ENCODE measurements at regions of chr17 and their contacts with region 1.

Region 1: DNA sequence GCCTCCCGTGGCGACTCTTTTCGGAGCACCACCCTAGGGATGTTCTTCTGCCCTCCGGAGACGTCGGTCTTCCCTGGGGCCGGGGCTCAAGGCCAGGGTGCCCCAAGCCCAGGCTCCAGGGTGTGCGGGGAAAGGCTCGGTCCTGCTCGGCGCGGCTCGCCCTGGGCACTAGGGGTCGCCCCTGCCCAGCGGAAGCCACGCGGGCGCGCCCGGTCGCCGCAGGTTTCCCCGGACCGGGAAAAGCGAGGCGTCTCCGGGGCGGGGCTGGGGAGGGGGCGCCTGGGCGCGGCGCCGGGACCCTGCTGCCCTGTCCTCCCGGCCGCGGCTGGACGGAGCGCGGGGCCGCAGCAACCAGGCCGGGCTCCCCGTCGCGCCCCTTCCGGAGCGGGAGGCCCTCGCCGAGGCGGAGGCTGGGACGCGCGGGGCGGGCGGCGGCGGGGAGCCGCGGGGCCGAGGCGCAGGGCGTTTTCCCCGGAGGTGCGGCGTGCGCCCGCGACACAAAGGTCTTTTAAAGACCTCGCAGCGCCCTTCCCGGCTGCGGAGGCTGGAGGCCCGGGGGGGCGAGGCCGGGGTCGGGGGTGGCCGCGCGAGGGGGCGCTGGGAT is 76.4 kb downstream of the MRC2 start:
- DNase-seq: peak; percentile 62 to 79
- ATAC-seq: peak; percentile 84 to 92 (median 86)
- H3K4me3 ChIP-seq: peak overlapping the region; percentile 36 to 73 (median 66)
- H3K27ac ChIP-seq: peak overlapping the region; percentile 71 to 95 (median 86)
- H3K4me1 ChIP-seq: peaks cover 8 to 39% (median 26%) of the 10 kb centered on the region in 9 donors
- H3K27me3 ChIP-seq: peaks cover 0 to 25% (median 0%) of the 10 kb centered on the region in 7 donors
- CTCF ChIP-seq: peak; percentile 69 to 94 (median 89)

Region 2: DNA sequence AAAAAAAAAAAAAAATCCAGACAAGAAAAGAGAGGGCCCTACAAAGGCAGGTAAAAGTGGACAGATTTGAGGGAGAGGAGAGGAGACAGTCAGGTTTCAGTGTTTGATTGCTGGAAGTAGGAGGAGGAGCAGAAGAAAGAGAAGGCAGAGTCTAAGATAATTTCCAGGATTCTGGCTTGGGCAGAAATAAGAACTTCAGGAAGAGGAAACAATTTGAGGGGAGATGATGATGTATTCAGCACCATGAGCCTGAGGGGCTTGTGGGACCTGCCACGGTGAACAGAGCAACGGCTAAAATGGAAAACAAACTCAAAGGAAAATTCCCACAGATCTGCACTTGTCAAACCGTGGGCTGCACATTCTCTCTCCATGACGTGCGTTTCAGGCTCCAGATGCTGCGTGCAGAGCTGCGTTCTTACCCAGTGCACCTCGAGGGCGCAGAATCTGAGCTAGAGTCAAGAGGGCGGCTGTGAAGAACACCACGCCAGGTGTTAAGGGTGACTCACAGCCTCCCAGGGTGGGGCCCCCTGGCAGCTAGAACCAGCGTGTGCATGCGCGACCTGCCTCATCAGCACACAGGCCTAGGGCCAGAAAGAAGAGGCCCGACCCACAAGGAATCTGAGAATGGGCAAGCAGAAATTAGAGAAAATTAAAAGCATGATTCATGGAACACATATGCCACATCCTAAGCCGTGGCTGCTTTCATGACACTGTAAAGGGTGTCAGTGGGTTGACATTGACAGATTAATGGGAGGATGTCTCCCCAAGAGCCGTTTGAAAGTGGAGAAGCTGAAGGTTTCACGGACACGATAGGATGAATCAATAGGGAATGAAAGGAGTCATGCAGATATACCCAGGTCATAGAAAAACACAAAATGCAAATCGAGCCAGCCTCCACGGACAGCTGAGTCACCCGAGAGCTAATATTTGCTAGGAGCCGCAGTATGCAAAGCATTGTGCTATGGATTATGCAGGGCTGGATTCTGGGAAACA is 75.1 kb after region 1 on chr17:
- intact Hi-C with region 1: no loop called
- DNase-seq: no peak
- ATAC-seq: peak in 1 of 8 donors; percentile 31
- H3K4me3 ChIP-seq: no peak overlapping the region
- H3K27ac ChIP-seq: no peak overlapping the region
- H3K4me1 ChIP-seq: no peaks in the 10 kb centered on the region
- H3K27me3 ChIP-seq: peaks cover 0 to 3% (median 0%) of the 10 kb centered on the region in 7 donors
- CTCF ChIP-seq: no peak

Region 3: GRCh38 chr17:63419949-63420867 is 716.3 kb after region 1 on chr17:
- intact Hi-C with region 1: loop called in 1 of 10 experiments (anchors 10 kb)
- DNase-seq: no peak
- ATAC-seq: peak in 7 of 8 donors; percentile 8 to 52 (median 35)
- H3K4me3 ChIP-seq: no peak overlapping the region
- H3K27ac ChIP-seq: peak overlapping the region in 3 of 10 donors; percentile 9 to 36 (median 35)
- H3K4me1 ChIP-seq: peaks cover 0 to 29% (median 9%) of the 10 kb centered on the region in 9 donors
- H3K27me3 ChIP-seq: no peaks in the 10 kb centered on the region
- CTCF ChIP-seq: no peak